Left lung (tissue), 14 donors: ENCODE measurements at regions of chr10 and their contacts with region 1.

Region 1: DNA sequence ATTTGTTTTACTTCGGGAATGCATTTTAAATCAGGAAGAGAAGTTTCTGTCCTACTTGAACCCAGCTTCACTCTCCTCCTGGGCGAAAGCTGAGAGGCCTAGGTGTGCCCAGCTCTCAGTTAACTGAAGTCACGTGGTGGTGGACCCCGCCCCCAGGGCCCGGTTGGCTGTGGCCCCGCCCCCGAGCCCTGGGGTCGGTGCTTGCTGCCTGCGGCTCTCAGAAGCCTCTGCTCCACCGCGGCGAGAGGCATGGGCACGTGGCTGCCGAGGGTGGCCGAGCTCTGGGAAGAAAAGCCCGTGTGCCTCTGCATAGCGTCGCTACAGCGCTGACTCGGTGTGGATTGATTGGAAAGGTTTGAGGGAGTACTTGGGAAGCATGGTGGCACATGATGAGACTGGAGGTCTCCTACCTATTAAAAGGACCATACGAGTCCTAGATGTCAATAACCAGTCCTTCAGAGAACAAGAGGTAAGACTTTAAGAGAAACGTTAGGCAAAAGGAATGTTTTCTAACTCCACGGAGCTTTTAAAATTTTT is 34.1 kb downstream of the NET1 start:
- DNase-seq: peak; percentile 78 to 97 (median 92)
- ATAC-seq: peak; percentile 94
- H3K4me3 ChIP-seq: peak overlapping the region; percentile 27 to 47
- H3K27ac ChIP-seq: peak overlapping the region; percentile 67 to 81
- H3K4me1 ChIP-seq: peaks cover 4 to 34% of the 10 kb centered on the region in 2 donors
- H3K27me3 ChIP-seq: no peaks in the 10 kb centered on the region
- CTCF ChIP-seq: no peak

Region 2: DNA sequence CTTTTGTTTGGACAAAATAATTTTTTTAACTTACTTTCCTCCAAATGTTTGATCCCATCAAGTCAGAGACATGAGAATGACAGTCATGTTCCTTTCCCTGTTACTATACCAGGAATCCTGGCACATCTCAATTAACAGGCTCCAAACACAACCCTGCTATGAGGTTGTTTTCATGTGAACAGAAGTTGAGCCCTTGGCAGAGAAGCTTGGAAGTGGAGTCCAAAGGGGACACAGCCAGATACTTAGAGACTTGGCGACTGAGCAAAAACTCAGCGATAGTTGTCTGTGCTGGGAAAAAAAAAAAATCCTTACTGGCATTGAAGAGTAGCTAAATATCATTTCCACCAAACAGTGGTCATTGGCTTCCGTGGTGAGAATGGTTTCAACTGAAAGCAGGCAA is 54.7 kb before region 1 on chr10:
- intact Hi-C with region 1: no loop called
- DNase-seq: no peak
- ATAC-seq: no peak
- H3K4me3 ChIP-seq: no peak overlapping the region
- H3K27ac ChIP-seq: no peak overlapping the region
- H3K4me1 ChIP-seq: no peaks in the 10 kb centered on the region
- H3K27me3 ChIP-seq: no peaks in the 10 kb centered on the region
- CTCF ChIP-seq: no peak

Region 3: GRCh38 chr10:5525561-5526341 is 79.3 kb after region 1 on chr10:
- intact Hi-C with region 1: no loop called
- DNase-seq: peak in 1 of 4 donors; percentile 23
- ATAC-seq: no peak
- H3K4me3 ChIP-seq: no peak overlapping the region
- H3K27ac ChIP-seq: no peak overlapping the region
- H3K4me1 ChIP-seq: no peaks in the 10 kb centered on the region
- H3K27me3 ChIP-seq: no peaks in the 10 kb centered on the region
- CTCF ChIP-seq: no peak

Region 4: DNA sequence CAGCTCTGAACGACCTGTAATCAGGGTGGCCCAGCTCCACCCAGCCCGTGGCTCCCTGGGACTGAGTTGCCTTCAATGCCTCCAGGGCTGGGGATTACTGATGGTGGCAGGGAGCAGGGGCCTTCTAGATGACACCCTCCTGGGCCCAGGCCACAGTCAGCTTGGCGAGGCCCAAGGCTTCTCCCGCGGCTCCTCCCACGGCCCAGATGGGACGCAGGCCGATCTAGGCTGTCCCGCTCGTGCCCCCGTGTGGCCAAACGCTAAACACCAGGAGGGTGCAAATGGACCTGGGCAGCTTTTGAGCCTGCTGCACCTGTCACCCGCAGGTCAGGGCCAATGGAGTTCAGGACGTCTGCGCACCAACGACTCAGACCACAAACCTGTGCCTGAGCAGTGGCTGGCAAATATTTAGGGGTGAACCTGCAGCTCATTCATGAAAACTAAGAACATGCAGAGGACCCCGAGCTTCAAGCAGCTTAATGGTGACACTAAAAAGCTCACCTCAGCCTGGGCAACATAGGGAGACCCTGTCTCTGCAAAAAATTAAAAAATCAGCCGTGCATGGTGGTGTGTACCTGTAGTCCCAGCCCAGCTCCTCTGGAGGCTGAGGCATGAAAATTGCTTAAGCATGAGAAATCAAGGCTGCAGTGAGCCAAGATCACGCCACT is 176.8 kb after region 1 on chr10:
- intact Hi-C with region 1: loop called (anchors 5 to 10 kb)
- DNase-seq: peak; percentile 63 to 96 (median 88)
- ATAC-seq: peak; percentile 97
- H3K4me3 ChIP-seq: no peak overlapping the region
- H3K27ac ChIP-seq: no peak overlapping the region
- H3K4me1 ChIP-seq: peaks cover 4 to 5% of the 10 kb centered on the region in 2 donors
- H3K27me3 ChIP-seq: no peaks in the 10 kb centered on the region
- CTCF ChIP-seq: peak; percentile 81

Region 5: GRCh38 chr10:5710859-5711258 is 264.4 kb after region 1 on chr10:
- intact Hi-C with region 1: no loop called
- DNase-seq: no peak
- ATAC-seq: peak; percentile 33
- H3K4me3 ChIP-seq: peak overlapping the region in 1 of 2 donors; percentile 3
- H3K27ac ChIP-seq: peak overlapping the region; percentile 9 to 10
- H3K4me1 ChIP-seq: peaks cover 0 to 21% of the 10 kb centered on the region in 2 donors
- H3K27me3 ChIP-seq: no peaks in the 10 kb centered on the region
- CTCF ChIP-seq: no peak